ENCODE measurements at regions of chr17 and their contacts with region 1.

Region 1: DNA sequence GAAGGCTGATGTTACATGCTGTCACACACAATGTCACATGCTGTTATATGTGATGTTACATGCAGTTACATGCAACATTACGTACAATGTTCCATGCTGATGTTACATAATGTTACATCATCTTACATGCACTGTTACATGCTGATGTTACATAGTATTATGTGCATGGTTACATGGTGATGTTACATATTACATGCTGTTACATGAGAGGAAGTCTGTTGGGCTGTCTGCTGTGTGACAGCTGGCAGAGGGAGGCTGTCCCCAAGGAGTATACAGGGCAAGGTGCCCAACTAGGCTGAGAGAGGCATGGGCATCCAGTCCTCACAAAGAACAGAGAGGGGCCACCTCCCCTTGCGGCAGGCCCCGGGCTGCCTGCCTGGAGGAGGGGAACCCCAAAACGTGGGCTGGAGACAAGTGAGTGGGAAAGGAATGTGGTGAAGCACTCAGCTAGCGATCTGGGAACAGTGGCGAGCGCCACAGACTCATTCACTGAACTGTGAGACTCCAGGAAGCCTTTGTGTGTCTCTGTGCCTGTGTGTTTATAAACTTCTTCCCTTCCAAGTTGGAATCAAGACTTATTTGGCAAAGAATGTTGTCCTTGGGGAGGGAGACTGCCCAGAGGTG is 30.6 kb downstream of the TMEM92 start:
- DNase-seq: peak; percentile 79
- ATAC-seq: peak; percentile 85
- H3K4me3 ChIP-seq: no peak overlapping the region
- H3K27ac ChIP-seq: peak overlapping the region; percentile 63
- H3K4me1 ChIP-seq: peaks cover 15% of the 10 kb centered on the region
- H3K27me3 ChIP-seq: no peaks in the 10 kb centered on the region
- CTCF ChIP-seq: no peak
- POLR2A ChIP-seq: no peak
- RAD21 ChIP-seq: no peak

Region 2: DNA sequence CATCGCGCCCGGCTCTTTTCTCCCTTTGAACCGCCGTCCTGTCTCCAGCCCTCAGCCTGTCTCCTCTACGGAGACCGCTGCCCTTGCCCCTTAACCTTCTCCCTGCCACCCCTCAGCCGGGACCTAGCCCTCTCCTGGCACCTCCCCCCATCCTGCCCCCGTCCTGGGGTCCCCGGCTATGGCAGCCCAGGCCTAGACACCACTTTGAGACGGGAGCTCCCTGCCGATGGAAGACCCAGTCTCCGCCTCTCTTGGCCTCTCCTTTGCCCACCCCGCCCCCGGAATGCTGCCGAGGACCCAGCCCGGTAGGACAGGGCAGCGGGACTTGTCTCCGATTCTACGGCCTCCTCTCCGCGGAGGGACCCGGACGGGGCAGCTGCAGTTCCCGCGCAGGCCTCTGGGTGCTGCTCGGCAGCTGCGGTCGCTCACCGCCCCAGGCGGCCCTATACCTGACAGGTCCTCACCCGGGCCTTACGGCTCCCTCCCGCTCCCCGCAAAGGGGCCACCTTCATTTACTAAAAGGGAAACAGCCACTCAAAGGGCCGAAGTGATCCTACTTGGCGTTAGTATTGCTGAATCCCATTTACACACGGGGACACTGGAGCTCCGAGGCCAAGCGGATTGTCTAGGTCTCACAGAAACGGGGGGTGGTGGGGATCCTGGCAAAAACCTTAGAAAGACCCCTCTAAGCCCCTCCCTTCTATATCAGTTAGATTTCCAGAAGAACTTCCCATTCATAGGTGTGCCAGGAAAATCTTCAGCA is 424.4 kb before region 1 on chr17:
- CTCF ChIA-PET with region 1: no interaction called
- POLR2A ChIA-PET with region 1: no interaction called
- dilution Hi-C with region 1: no loop called
- in situ Hi-C with region 1: loop called (anchors 25 kb)
- intact Hi-C with region 1: no loop called
- DNase-seq: peak; percentile 44
- ATAC-seq: peak; percentile 100
- H3K4me3 ChIP-seq: no peak overlapping the region
- H3K27ac ChIP-seq: no peak overlapping the region
- H3K4me1 ChIP-seq: no peaks in the 10 kb centered on the region
- H3K27me3 ChIP-seq: peaks cover 73% of the 10 kb centered on the region
- CTCF ChIP-seq: peak; percentile 77
- POLR2A ChIP-seq: no peak
- RAD21 ChIP-seq: peak; percentile 73

Region 3: GRCh38 chr17:50037321-50038071 is 267.4 kb before region 1 on chr17:
- CTCF ChIA-PET with region 1: no interaction called
- POLR2A ChIA-PET with region 1: no interaction called
- dilution Hi-C with region 1: no loop called
- in situ Hi-C with region 1: no loop called
- intact Hi-C with region 1: loop called (anchors 10 kb)
- DNase-seq: peak; percentile 81
- ATAC-seq: peak; percentile 97
- H3K4me3 ChIP-seq: no peak overlapping the region
- H3K27ac ChIP-seq: peak overlapping the region; percentile 38
- H3K4me1 ChIP-seq: peaks cover 38% of the 10 kb centered on the region
- H3K27me3 ChIP-seq: no peaks in the 10 kb centered on the region
- CTCF ChIP-seq: no peak
- POLR2A ChIP-seq: no peak
- RAD21 ChIP-seq: no peak

Region 4: GRCh38 chr17:50345432-50346312 is 40.8 kb after region 1 on chr17 and contains the start of gene XYLT2:
- CTCF ChIA-PET with region 1: no interaction called
- POLR2A ChIA-PET with region 1: no interaction called
- dilution Hi-C with region 1: no loop called
- in situ Hi-C with region 1: no loop called
- intact Hi-C with region 1: no loop called
- DNase-seq: peak; percentile 80
- ATAC-seq: peak; percentile 92
- H3K4me3 ChIP-seq: peak within 1 kb of the TSS; percentile 95
- H3K27ac ChIP-seq: peak within 1 kb of the TSS; percentile 81
- H3K4me1 ChIP-seq: peaks cover 19% of the 10 kb centered on the region
- H3K27me3 ChIP-seq: 0 out of 2 replicates have a peak, but pooled peaks cover 2% of the 10 kb centered on the region
- CTCF ChIP-seq: no peak
- POLR2A ChIP-seq: no peak; the same call in none of the 2 replicates
- RAD21 ChIP-seq: no peak
- total RNA-seq, gene XYLT2: 31.9 and 35.0 TPM in 2 replicates

Measured in IMR-90 (cell line).